Natural killer cell (primary cell): ENCODE measurements at regions of chr15 and their contacts with region 1.

Region 1: GRCh38 chr15:40323239-40323952 is at the start of gene INAFM2:
- DNase-seq: peak; percentile 84 to 96
- ATAC-seq: peak; percentile 83 to 93 (median 86)
- H3K4me3 ChIP-seq: peak within 1 kb of the TSS; percentile 35
- H3K4me3 Mint-ChIP-seq: peak within 1 kb of the TSS; percentile 87
- H3K27ac ChIP-seq: peak within 1 kb of the TSS; percentile 40
- H3K27ac Mint-ChIP-seq: peak within 1 kb of the TSS; percentile 78 to 92
- H3K4me1 ChIP-seq: peaks cover 23% of the 10 kb centered on the region
- H3K4me1 Mint-ChIP-seq: peaks cover 39 to 52% of the 10 kb centered on the region in 2 donors
- H3K27me3 ChIP-seq: no peaks in the 10 kb centered on the region
- H3K27me3 Mint-ChIP-seq: no peaks in the 10 kb centered on the region
- CTCF ChIP-seq: peak; percentile 59
- total RNA-seq, gene INAFM2: 14.0 to 21.7 (median 15.1) TPM

Region 2: DNA sequence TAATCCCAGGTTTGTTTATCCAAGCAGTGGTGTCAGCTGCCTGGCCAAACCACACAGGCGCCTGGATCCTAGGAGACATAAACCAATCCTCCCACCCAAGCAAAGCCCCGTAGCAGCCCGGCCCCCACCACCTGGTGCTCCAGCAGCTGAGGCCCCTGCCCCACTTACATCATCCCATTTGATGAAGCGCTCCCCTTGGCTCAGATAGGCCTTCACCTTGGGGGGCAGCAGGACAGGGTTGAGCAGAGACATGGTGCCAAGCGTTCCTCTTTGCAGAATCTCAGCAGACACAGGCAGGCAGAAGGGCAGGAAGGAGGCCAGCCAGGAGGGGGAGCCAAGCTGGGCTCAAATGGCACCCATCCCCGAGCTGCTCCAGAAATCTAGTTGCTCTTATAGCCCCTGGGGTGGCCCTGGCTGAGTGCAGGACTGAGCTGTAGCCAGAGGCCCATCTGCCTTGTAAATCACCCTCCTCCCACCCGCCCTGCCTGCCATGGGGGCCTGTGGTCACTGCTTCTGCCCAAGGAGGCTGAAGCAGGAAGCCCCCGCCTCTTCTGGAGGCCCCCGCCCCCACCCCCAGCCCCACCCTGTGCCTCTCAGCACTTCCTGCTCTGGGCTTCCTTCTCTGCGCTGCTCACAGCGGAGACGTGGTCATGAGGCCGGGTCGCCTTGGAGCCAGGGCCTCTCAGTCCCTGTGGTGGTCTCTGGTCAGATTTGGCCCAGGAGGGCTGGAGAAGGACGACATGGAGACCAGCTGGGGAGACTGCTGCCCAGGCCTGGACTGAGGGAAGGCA is 15.8 kb before region 1 on chr15 and contains the start of gene PLCB2:
- intact Hi-C with region 1: loop called (anchors 1 kb)
- DNase-seq: peak; percentile 60 to 85
- ATAC-seq: peak; percentile 78 to 85 (median 79)
- H3K4me3 ChIP-seq: peak within 1 kb of the TSS; percentile 86
- H3K4me3 Mint-ChIP-seq: peak within 1 kb of the TSS; percentile 95
- H3K27ac ChIP-seq: peak within 1 kb of the TSS; percentile 89
- H3K27ac Mint-ChIP-seq: peak within 1 kb of the TSS; percentile 84 to 92
- H3K4me1 ChIP-seq: peaks cover 56% of the 10 kb centered on the region
- H3K4me1 Mint-ChIP-seq: peaks cover 58 to 70% of the 10 kb centered on the region in 2 donors
- H3K27me3 ChIP-seq: no peaks in the 10 kb centered on the region
- H3K27me3 Mint-ChIP-seq: no peaks in the 10 kb centered on the region
- CTCF ChIP-seq: peak; percentile 62
- total RNA-seq, gene PLCB2: 345 to 440 (median 432) TPM

Region 3: DNA sequence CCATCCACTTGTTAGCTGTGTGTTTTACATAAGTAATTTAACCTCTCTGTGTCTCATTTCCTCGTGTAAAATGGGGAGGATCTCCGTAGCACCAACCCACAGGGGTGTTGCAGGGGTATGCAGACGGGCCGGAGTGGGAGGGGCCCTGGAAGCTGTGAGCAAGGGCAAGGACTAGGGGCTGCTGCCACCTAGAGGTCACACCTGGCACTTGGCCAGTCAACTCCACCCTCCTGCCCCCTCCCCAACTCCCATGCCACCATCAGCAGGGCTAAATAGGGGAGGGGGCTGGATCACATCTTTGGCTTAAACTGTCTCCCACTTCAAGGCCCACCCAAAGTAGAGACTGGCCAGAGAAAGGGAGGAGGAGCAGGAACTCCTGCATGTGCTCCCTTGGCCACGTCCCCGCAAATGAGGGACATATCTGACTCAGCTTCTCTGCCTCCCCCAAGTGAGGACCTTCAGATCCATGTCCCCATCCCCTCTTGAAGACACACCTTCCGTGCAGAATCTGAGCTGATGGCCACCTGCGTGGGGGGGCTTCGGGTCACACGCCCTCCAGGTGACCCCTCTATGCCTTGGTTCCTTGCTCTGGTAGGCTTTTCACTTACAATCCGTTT is 14.8 kb after region 1 on chr15:
- intact Hi-C with region 1: loop called (anchors 2 kb)
- DNase-seq: peak; percentile 67 to 89
- ATAC-seq: peak; percentile 84 to 96 (median 94)
- H3K4me3 ChIP-seq: no peak overlapping the region
- H3K4me3 Mint-ChIP-seq: no peak overlapping the region
- H3K27ac ChIP-seq: no peak overlapping the region
- H3K27ac Mint-ChIP-seq: no peak overlapping the region
- H3K4me1 ChIP-seq: peaks cover 38% of the 10 kb centered on the region
- H3K4me1 Mint-ChIP-seq: peaks cover 0 to 19% of the 10 kb centered on the region in 2 donors
- H3K27me3 ChIP-seq: no peaks in the 10 kb centered on the region
- H3K27me3 Mint-ChIP-seq: peaks cover 0 to 2% of the 10 kb centered on the region in 2 donors
- CTCF ChIP-seq: peak; percentile 91

Region 4: DNA sequence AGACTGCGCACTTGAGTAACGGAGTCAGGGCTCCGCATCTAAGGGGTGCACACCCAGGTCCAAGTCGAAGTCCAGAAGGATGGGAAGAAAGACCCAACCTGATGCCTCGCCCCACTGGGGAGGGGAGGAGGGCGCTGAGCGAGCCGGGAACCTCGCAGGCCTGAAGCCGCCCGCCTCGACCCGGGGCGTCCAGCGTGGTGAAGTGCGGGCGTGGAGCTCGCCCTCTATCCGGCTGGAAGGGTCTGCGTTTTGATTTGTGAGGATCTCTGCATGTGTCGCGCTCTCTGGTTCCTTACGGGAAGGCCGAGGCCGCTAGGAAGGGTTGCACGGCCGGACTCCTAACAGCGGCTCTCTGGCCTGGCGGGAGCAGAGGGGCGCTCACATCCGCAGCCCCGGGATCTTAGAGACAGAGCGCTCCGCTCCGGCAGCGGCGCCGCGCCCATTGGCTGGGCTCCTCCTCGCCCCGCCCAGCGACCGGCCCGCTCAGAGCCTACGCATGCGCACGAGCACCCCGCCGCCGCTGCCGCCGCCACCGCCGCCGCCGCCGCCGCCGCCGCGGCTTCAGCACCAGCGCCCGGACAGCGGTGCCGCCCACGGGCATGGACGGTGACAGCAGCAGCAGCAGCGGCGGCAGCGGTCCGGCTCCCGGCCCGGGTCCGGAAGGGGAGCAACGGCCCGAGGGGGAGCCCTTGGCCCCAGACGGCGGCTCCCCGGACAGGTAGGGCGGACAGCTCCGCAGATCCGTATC is 34.5 kb after region 1 on chr15 and contains the start of gene DISP2:
- intact Hi-C with region 1: loop called (anchors 1 kb)
- DNase-seq: peak; percentile 88 to 94
- ATAC-seq: peak; percentile 87 to 94 (median 93)
- H3K4me3 ChIP-seq: peak within 1 kb of the TSS; percentile 54
- H3K4me3 Mint-ChIP-seq: peak within 1 kb of the TSS; percentile 85
- H3K27ac ChIP-seq: no peak within 1 kb of the TSS
- H3K27ac Mint-ChIP-seq: peak within 1 kb of the TSS; percentile 23 to 75
- H3K4me1 ChIP-seq: peaks cover 18% of the 10 kb centered on the region
- H3K4me1 Mint-ChIP-seq: peaks cover 11 to 27% of the 10 kb centered on the region in 2 donors
- H3K27me3 ChIP-seq: no peaks in the 10 kb centered on the region
- H3K27me3 Mint-ChIP-seq: peaks cover 0 to 9% of the 10 kb centered on the region in 2 donors
- CTCF ChIP-seq: no peak
- total RNA-seq, gene DISP2: 0.20 to 1.0 (median 0.26) TPM